A673 (cell line): ENCODE measurements at regions of chr5 and their contacts with region 1.

Region 1: DNA sequence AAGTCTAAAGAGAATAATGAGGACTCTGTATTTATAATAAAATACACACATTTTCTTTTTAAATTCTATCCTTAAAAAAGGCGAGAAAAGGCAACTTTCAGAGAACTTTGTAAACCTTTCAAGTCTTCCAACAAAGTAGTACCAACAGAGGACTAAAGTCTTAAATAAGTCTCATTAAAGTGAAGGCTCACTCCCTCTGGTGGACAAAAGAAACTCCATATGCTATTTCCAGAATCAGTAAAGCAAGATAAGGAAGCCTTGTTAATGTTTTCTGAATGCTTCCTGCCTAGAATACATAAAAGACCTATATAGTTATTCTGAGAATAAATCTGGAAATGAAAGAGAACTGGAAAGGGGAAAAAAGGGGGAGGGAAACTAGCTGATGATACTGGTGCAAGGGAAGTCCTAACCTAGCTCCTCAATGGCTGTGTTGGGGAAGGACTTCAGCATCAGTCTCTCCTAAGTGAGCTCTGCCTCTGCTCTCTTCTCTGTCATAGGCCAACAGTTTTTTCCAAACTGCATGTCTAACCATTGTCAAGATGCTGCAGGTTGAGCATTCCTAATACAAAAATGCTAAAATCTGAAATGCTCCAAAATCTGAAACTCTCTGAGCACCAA is 7.2 kb downstream of the HMGCS1 start:
- DNase-seq: peak; percentile 80
- H3K4me3 ChIP-seq: no peak overlapping the region
- H3K27ac ChIP-seq: no peak overlapping the region
- H3K4me1 ChIP-seq: peaks cover 44% of the 10 kb centered on the region
- H3K27me3 ChIP-seq: no peaks in the 10 kb centered on the region
- CTCF ChIP-seq: peak; percentile 85

Region 2: GRCh38 chr5:43120720-43121564 is 185.1 kb before region 1 on chr5 and contains the start of gene ZNF131:
- CTCF ChIA-PET with region 1: no interaction called
- POLR2A ChIA-PET with region 1: no interaction called
- intact Hi-C with region 1: loop called (anchors 10 kb)
- DNase-seq: peak; percentile 98
- H3K4me3 ChIP-seq: peak within 1 kb of the TSS; percentile 56
- H3K27ac ChIP-seq: peak within 1 kb of the TSS; percentile 90
- H3K4me1 ChIP-seq: peaks cover 23% of the 10 kb centered on the region
- H3K27me3 ChIP-seq: no peaks in the 10 kb centered on the region
- CTCF ChIP-seq: no peak
- total RNA-seq, gene ZNF131: 43.6 and 45.0 TPM in 2 replicates

Region 3: DNA sequence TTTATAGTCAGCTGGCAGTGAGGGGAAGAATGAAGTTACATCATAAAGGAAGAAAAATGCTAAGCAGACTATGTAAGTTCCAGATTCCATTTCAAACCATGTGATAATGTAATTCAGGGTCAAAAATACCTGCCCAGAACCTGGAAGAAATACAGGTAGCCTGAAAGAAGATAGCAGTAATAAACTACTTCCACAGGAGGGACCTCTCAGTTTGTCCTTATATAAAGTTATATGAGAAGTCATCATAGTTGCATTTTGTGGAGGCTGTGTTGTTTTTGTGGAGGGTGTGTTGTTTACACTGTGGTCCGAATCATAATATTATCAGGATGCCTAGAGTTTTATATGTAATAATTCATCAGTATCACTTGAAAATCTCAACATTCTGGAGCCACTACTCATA is 638.3 kb after region 1 on chr5:
- CTCF ChIA-PET with region 1: no interaction called
- POLR2A ChIA-PET with region 1: no interaction called
- intact Hi-C with region 1: no loop called
- DNase-seq: no peak
- H3K4me3 ChIP-seq: no peak overlapping the region
- H3K27ac ChIP-seq: no peak overlapping the region
- H3K4me1 ChIP-seq: no peaks in the 10 kb centered on the region
- H3K27me3 ChIP-seq: no peaks in the 10 kb centered on the region
- CTCF ChIP-seq: no peak